ENCODE measurements at regions of chr3 and their contacts with region 1.

Region 1: DNA sequence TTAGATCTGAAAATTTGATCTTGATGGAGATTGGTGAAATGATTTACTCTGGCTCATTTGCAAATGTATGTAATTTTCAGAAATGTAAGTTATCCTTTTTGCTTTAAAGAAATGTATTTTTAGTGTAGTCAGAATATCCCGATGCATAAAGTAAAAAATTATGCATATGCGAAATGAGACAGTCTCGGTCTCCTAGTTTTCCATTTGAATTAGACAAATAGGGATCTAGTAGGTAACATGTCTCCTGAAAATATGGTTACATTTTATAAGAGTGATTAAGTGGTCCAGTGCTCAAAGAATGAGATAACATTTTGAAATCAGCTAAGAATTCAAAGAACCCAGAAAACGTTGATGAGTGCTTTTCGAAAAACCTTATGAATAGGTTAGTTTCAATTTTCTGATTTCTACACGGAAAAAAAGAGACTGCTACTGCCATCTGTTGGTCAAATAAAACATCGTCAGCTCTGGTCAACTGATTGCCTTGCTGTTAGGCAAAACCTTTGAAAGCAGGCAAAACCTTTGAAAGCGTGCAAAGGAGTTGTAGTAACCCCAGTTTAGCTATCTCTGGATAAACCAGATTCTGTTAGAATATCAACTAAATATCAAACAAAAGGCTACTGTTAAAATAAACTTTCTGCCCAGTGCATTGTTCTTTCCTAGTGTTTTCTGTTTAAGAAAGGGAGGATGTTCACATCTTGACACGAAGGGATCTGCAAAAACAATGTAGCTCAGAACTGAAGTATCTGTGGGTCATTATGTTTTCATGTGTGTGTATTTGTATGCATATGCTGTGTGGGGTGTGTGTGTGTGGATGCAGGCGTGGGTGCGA is 59.3 kb upstream of the CHMP2B start:
- DNase-seq: peak; percentile 15
- H3K4me3 ChIP-seq: peak overlapping the region; percentile 34
- H3K27me3 ChIP-seq: no peaks in the 10 kb centered on the region
- CTCF ChIP-seq: peak; percentile 59

Region 2: DNA sequence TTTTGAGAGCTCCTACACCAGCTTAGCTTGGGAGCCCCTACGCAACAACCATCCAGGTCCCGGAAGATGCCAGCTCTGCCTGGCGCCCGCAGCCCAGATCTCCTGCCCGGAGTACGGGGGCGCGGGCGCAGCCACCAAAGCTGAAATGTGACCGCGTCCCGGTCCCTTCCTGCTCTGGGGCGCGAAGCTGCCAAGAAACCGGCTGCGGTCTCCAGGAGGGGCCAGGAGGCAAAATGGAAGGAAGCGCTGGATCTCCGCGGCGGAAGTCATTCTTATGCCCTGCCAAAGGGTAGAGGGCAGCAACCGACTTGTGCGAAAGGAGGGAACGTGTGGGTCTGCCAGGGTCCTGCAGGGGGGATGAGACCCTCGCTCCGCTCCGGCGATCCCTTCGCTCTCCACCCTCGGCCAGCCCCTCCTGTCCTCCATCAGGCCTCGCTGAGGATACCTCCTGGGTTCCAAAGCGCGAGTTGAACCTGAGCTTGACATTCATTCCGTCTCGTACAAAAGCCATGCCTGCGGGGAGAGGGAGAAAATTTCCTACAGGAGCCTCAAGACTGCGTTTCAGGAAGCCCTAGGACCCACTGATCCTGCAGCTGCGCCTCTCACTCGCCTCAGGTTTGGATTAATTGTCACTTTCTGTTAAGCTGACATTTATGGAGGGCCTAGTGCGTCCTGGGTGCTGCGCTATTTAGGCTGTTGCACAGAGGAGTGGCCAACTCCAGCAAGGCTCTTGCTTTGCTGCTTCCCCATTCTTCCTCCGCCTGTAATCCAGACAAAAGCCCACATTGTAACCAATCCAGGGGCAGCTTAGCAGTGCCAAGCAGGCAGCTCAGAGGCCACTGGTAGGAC is 78.6 kb before region 1 on chr3:
- CTCF ChIA-PET with region 1: interaction called, 16 read pairs
- POLR2A ChIA-PET with region 1: no interaction called
- DNase-seq: peak; percentile 60
- H3K4me3 ChIP-seq: peak overlapping the region; percentile 37
- H3K27me3 ChIP-seq: no peaks in the 10 kb centered on the region
- CTCF ChIP-seq: no peak

Region 3: DNA sequence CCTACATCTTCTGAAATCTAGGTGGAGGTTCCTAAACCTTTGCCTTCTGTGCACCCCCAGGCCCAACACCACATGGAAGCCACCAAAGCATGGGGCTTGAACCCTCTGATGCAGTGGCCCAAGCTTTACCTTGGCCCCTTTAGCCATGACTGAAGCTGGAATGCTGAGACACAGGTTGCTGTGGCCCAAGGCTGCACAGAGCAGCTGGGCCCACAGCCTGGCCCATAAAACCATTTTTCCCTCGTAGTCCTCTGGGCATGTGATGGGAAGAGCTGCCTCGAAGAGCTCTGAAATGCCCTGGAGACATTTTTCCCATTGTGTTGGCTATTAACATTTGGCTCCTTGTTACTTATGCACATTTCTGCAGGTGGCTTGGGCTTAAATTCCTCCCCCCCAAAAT is 17.7 kb before region 1 on chr3:
- CTCF ChIA-PET with region 1: no interaction called
- POLR2A ChIA-PET with region 1: no interaction called
- DNase-seq: no peak
- H3K4me3 ChIP-seq: no peak overlapping the region
- H3K27me3 ChIP-seq: no peaks in the 10 kb centered on the region; the same call in 1 of the 2 replicates
- CTCF ChIP-seq: no peak